ENCODE measurements at regions of chr6 and their contacts with region 1.

Region 1: GRCh38 chr6:110039364-110039980 is 61.4 kb downstream of the GPR6 start:
- DNase-seq: peak; percentile 84 to 86
- H3K4me3 ChIP-seq: peak overlapping the region; percentile 13 to 44 (median 26); a peak in 6 of 8 replicates
- H3K27ac ChIP-seq: no peak overlapping the region
- H3K4me1 ChIP-seq: peaks cover 0 to 3% (median 3%) of the 10 kb centered on the region in 4 experiments; a peak in 5 of 7 replicates
- H3K27me3 ChIP-seq: no peaks in the 10 kb centered on the region
- CTCF ChIP-seq: peak; percentile 79 to 94 (median 86)
- EP300 ChIP-seq: no peak
- POLR2A ChIP-seq: no peak
- RAD21 ChIP-seq: peak; percentile 94 to 96

Region 2: DNA sequence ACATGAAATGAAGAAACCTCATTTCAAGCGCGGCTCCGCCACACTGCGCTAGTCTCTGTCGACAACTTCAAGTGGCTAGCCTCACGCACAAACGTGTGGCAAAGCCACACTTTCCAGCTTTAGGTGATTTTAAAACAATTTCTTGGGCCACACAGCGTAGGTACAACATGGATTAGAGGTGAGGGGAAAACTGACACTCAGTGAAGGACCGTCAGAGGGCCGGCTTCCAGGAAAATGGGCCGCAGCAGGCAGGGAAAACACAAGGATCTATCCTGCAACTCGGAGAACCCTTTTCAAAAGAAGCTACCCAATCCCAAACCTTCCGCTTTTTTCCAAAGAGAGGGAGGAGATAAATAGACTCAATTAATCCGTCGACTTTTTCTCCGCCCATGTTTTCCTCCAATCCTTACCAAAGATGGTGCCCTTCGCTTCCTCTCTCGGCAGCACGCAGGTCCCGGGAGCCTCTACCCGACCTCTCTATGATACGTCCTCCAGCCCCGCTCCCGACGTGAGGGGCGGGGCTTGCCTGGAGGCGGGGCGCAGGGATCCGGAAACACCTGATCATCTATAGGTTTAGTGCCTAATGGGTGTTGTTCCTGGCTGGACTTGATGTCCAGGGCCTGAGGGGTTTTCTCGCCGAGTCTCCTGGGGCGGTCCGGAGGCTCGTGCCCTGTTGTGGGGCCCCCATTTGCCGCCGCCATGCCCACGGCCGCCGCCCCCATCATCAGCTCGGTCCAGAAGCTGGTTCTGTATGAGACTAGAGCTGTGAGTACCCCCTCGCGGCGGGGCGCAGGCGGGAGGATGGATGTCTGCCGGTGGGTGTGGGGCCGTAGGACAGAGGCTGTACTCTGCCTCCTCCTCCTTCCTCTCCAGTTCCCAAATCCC is 348.5 kb before region 1 on chr6 and contains the starts of genes AK9 and FIG4:
- CTCF ChIA-PET with region 1: interaction called, 10 read pairs
- POLR2A ChIA-PET with region 1: interaction called, 6 read pairs
- DNase-seq: peak; percentile 84 to 95
- H3K4me3 ChIP-seq: peak within 1 kb of the TSS; percentile 69 to 95 (median 84)
- H3K27ac ChIP-seq: peak within 1 kb of the TSS; percentile 42
- H3K4me1 ChIP-seq: peaks cover 0 to 2% (median 0%) of the 10 kb centered on the region in 4 experiments; a peak in 1 of 7 replicates
- H3K27me3 ChIP-seq: no peaks in the 10 kb centered on the region
- CTCF ChIP-seq: 0 out of 4 replicates have a peak, but pooled peaks of 1 of the 3 experiments have one; percentile 6
- EP300 ChIP-seq: no peak
- POLR2A ChIP-seq: peak; percentile 57 to 71
- RAD21 ChIP-seq: peak in 1 of 2 experiments; percentile 21; a peak in 2 of 4 replicates
- total RNA-seq, gene AK9: 1.8 and 2.7 TPM in 2 replicates
- total RNA-seq, gene FIG4: 21.3 and 21.9 TPM in 2 replicates

Region 3: GRCh38 chr6:109783250-109783986 is 256.1 kb before region 1 on chr6:
- CTCF ChIA-PET with region 1: interaction called, 123 read pairs
- POLR2A ChIA-PET with region 1: no interaction called
- DNase-seq: peak in 1 of 2 experiments; percentile 57
- H3K4me3 ChIP-seq: no peak overlapping the region
- H3K27ac ChIP-seq: no peak overlapping the region
- H3K4me1 ChIP-seq: no peaks in the 10 kb centered on the region
- H3K27me3 ChIP-seq: no peaks in the 10 kb centered on the region
- CTCF ChIP-seq: peak in 2 of 3 experiments; percentile 75 to 79; a peak in 3 of 4 replicates
- EP300 ChIP-seq: no peak
- POLR2A ChIP-seq: no peak
- RAD21 ChIP-seq: peak; percentile 80 to 86

Region 4: GRCh38 chr6:109867009-109867969 is 172.2 kb before region 1 on chr6:
- CTCF ChIA-PET with region 1: interaction called, 25 read pairs
- POLR2A ChIA-PET with region 1: no interaction called
- DNase-seq: no peak
- H3K4me3 ChIP-seq: no peak overlapping the region
- H3K27ac ChIP-seq: no peak overlapping the region
- H3K4me1 ChIP-seq: peaks cover 0 to 17% (median 10%) of the 10 kb centered on the region in 4 experiments; a peak in 5 of 7 replicates
- H3K27me3 ChIP-seq: no peaks in the 10 kb centered on the region
- CTCF ChIP-seq: no peak
- EP300 ChIP-seq: no peak
- POLR2A ChIP-seq: no peak
- RAD21 ChIP-seq: no peak

Region 5: DNA sequence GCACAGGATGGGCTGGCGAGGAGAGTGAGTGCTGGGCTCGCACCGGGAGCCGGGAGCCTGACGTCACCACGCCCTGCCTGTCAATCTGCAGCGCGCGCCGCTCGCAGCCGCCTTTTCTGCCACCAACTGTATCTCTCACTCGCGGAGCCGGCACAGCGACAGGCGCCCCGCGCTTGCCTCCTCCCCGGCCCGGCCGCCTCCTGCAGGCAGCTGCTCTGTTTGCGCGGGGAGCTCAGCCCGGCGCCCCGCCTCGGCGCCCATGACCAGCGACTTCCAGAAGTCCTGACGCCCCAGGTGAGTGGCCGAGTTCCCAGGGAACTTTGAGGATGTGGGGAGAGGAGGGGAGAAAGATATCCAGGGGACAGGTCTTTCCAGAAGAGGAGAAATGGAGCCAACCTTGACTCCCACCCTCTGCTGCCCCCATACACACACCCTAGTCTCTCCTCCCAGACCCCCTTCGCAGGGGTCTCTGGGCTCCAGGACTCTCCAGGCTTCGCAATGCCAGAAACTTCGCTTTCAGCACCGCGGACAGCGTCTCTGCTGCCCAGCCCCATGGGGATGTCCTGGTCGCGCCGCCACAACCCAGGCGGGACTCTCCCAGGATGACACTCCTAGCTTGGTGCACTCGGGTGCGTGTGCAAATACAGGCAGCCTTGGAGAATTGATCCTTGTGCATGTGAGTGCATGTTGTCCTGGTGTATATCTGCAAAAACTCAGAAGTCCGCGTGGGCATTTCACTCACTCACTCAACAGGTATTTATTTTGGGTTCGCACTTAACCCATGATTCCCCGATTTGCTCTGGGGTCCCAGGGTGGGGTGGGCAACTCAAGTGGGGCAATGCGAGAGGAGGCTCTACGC is 61.1 kb before region 1 on chr6 and contains the start of gene GPR6:
- CTCF ChIA-PET with region 1: interaction called, 12 read pairs
- POLR2A ChIA-PET with region 1: no interaction called
- DNase-seq: peak in 1 of 2 experiments; percentile 97
- H3K4me3 ChIP-seq: peak within 1 kb of the TSS; percentile 35 to 93 (median 64)
- H3K27ac ChIP-seq: no peak within 1 kb of the TSS
- H3K4me1 ChIP-seq: peaks cover 0 to 11% (median 10%) of the 10 kb centered on the region in 4 experiments; a peak in 6 of 7 replicates
- H3K27me3 ChIP-seq: peaks cover 14 to 23% (median 19%) of the 10 kb centered on the region in 4 experiments
- CTCF ChIP-seq: no peak
- EP300 ChIP-seq: no peak
- POLR2A ChIP-seq: no peak
- RAD21 ChIP-seq: no peak; a peak in 1 of 4 replicates
- total RNA-seq, gene GPR6: 0.27 and 0.37 TPM in 2 replicates

Region 6: GRCh38 chr6:110053395-110054240 is 14.1 kb after region 1 on chr6:
- CTCF ChIA-PET with region 1: interaction called, 49 read pairs
- POLR2A ChIA-PET with region 1: interaction called, 3 read pairs
- DNase-seq: no peak
- H3K4me3 ChIP-seq: no peak overlapping the region
- H3K27ac ChIP-seq: no peak overlapping the region
- H3K4me1 ChIP-seq: peaks cover 0 to 3% (median 0%) of the 10 kb centered on the region in 4 experiments; a peak in 1 of 7 replicates
- H3K27me3 ChIP-seq: no peaks in the 10 kb centered on the region
- CTCF ChIP-seq: peak in 2 of 3 experiments; percentile 71 to 78; a peak in 3 of 4 replicates
- EP300 ChIP-seq: no peak
- POLR2A ChIP-seq: no peak
- RAD21 ChIP-seq: peak; percentile 90 to 91

Region 7: DNA sequence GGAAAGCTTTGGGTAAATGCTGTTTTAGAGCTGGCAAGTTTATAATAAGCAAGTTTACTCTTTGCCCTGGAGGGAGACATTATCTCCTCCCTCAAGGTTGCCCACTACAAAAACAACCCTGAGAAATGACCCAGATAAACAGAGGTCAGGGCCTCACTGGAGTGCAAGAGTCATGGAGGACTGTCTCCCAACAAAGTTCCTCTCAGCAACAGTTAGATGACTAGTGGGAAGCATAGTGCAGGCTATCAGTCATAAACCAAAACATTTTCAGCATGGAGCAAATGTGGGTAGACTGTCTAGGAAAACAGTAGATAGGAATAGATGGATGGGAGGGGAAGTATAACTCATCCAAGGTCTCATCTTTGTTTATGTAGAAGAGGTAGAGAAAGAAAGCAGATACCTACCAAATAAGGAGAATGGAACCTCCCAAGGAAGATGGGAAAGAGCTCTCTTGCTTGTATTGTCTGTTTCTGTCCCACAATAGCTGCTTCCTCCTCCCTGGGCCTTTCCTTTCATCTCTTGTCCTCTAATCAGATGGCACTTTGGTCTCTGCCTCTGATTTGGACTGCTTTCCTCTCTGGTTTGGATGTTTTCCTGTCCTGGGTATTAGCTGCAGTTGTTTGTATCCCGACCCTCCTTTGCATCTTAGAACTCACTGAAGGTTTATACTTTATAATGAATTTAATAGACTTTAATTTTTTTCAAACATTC is 44.6 kb after region 1 on chr6:
- CTCF ChIA-PET with region 1: no interaction called
- POLR2A ChIA-PET with region 1: no interaction called
- DNase-seq: no peak
- H3K4me3 ChIP-seq: no peak overlapping the region
- H3K27ac ChIP-seq: 0 out of 2 replicates have a peak overlapping the region, but pooled peaks have one; percentile 1
- H3K4me1 ChIP-seq: no peaks in the 10 kb centered on the region
- H3K27me3 ChIP-seq: no peaks in the 10 kb centered on the region
- CTCF ChIP-seq: no peak
- EP300 ChIP-seq: no peak
- POLR2A ChIP-seq: no peak
- RAD21 ChIP-seq: no peak

Measured in H1 (cell line).